GM10248 (cell line): ENCODE measurements at regions of chr9 and their contacts with region 1.

Region 1: GRCh38 chr9:12329623-12329985 is 363.6 kb upstream of the TYRP1 start:
- DNase-seq: no peak
- CTCF ChIP-seq: no peak

Region 2: GRCh38 chr9:10366171-10366779 is 1963.3 kb before region 1 on chr9:
- CTCF ChIA-PET with region 1: interaction called, 17 read pairs
- POLR2A ChIA-PET with region 1: no interaction called
- DNase-seq: peak; percentile 7
- CTCF ChIP-seq: peak; percentile 58

Region 3: DNA sequence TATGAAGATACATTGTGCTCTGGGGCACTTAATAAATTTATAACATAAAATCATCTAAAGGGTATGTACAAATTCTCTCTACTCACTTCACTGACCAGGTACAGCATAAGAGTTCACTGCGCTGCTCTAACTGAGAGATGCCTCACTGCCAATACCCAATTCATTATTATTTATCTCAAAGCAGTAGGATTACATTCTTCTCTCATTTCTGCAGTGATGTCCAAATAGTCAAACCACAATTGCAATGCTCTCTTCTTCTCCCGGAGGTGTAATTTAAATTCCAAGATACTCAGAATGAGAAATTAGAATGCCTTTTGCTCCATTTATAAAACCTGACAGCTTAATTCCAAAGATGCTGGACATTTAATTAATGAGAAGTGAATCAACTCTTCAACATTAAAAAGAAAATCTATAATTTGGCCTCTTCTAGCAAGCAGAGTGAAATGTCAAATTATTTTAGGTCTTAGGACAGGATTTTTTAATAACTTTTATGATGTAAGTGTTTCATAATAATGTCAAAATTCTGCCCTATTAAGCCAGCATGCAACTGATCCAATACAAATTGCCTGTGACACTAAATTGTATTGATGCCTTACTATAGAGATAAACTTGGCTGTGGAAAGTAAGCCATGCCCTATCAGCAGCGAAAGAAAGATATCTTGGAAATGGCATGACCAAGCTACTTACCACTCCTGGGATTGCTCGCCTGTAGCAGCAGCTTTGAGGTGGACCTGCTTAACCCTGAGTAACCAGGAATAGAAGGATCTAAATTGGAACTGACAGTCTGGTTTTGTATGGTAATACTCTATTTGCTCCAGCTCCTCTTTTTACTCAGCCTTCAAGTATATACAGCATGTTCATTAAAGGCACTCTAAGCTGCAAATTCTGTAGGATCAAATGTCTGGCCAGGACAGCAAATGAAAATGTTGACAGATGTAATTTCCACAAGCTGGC is 10.6 kb before region 1 on chr9:
- CTCF ChIA-PET with region 1: no interaction called
- POLR2A ChIA-PET with region 1: no interaction called
- DNase-seq: no peak
- CTCF ChIP-seq: no peak